WTC11 (cell line): ENCODE measurements at regions of chr1 and their contacts with region 1.

Region 1: DNA sequence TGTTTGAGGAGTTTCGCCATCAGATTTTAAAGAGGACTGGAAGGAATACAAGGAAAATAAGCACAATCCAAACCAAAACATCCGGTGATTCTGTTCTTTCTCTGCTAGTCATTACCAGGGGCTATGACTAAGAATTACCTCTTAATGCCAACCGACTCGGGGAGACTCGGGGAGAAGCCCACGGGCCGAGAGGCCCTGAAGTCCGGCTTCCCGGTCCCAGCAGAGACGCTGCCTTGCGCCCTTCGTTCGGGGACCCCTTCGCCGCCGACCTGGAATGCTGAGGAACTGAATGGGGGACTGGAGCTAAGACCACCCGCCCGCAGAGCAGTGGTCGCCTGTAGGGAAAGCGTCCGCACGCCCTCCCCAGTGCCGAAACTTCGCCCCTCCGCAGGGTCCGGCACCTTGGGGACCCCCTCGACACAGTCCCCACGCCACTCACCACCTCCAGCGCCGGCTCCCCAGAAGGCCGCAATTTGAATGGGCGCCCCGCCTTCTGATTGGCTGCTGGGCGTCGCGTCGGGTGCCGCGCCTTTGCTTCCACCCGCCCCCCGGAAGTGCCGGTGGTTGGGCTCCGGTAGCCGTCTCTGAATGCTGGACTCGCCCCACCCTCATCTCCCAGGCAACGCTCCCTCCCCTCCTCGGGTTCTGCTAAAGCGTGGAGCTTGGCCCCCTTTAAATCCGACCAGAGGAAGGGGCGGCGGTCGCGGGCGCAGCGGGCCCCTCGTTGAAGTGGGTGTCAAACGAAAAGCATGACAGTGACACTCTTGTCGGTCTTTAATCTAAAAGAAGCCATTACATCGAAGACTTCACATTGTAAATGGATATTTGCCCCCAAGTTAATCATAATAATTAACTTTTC is at the start of gene KIF14:
- DNase-seq: peak; percentile 95
- ATAC-seq: peak; percentile 99
- H3K4me3 Mint-ChIP-seq: peak within 1 kb of the TSS; percentile 96
- H3K27ac Mint-ChIP-seq: peak within 1 kb of the TSS; percentile 87
- H3K4me1 Mint-ChIP-seq: peaks cover 24% of the 10 kb centered on the region
- H3K27me3 Mint-ChIP-seq: no peaks in the 10 kb centered on the region
- CTCF ChIP-seq: no peak
- total RNA-seq, gene KIF14: 20.0 to 24.4 TPM (median 20.7 TPM) in 3 replicates

Region 2: GRCh38 chr1:200226268-200226968 is 394.1 kb before region 1 on chr1:
- CTCF ChIA-PET with region 1: no interaction called
- POLR2A ChIA-PET with region 1: no interaction called
- DNase-seq: no peak
- ATAC-seq: peak; percentile 75
- H3K4me3 Mint-ChIP-seq: peak overlapping the region; percentile 4; the same call in 1 of the 2 replicates
- H3K27ac Mint-ChIP-seq: peak overlapping the region; percentile 93
- H3K4me1 Mint-ChIP-seq: peaks cover 54% of the 10 kb centered on the region
- H3K27me3 Mint-ChIP-seq: no peaks in the 10 kb centered on the region; the same call in 1 of the 2 replicates
- CTCF ChIP-seq: no peak

Region 3: GRCh38 chr1:200634261-200635122 is 14.0 kb after region 1 on chr1:
- CTCF ChIA-PET with region 1: interaction called, 16 read pairs
- POLR2A ChIA-PET with region 1: no interaction called
- DNase-seq: no peak
- ATAC-seq: no peak; the same call in 1 of the 2 replicates
- H3K4me3 Mint-ChIP-seq: no peak overlapping the region
- H3K27ac Mint-ChIP-seq: no peak overlapping the region
- H3K4me1 Mint-ChIP-seq: peaks cover 8% of the 10 kb centered on the region
- H3K27me3 Mint-ChIP-seq: no peaks in the 10 kb centered on the region
- CTCF ChIP-seq: no peak

Region 4: GRCh38 chr1:200669314-200670241 is 49.1 kb after region 1 on chr1 and contains the start of gene DDX59:
- CTCF ChIA-PET with region 1: interaction called, 40 read pairs
- POLR2A ChIA-PET with region 1: interaction called, 8 read pairs
- DNase-seq: peak; percentile 96
- ATAC-seq: peak; percentile 88
- H3K4me3 Mint-ChIP-seq: peak within 1 kb of the TSS; percentile 80
- H3K27ac Mint-ChIP-seq: peak within 1 kb of the TSS; percentile 70
- H3K4me1 Mint-ChIP-seq: peaks cover 36% of the 10 kb centered on the region
- H3K27me3 Mint-ChIP-seq: no peaks in the 10 kb centered on the region
- CTCF ChIP-seq: no peak
- total RNA-seq, gene DDX59: 15.5 to 19.4 TPM (median 17.0 TPM) in 3 replicates

Region 5: GRCh38 chr1:200802865-200803512 is 182.5 kb after region 1 on chr1:
- CTCF ChIA-PET with region 1: interaction called, 29 read pairs
- POLR2A ChIA-PET with region 1: no interaction called
- DNase-seq: peak; percentile 94
- ATAC-seq: peak; percentile 98
- H3K4me3 Mint-ChIP-seq: no peak overlapping the region
- H3K27ac Mint-ChIP-seq: peak overlapping the region; percentile 73; the same call in 1 of the 2 replicates
- H3K4me1 Mint-ChIP-seq: peaks cover 41% of the 10 kb centered on the region
- H3K27me3 Mint-ChIP-seq: no peaks in the 10 kb centered on the region
- CTCF ChIP-seq: peak; percentile 80

Region 6: DNA sequence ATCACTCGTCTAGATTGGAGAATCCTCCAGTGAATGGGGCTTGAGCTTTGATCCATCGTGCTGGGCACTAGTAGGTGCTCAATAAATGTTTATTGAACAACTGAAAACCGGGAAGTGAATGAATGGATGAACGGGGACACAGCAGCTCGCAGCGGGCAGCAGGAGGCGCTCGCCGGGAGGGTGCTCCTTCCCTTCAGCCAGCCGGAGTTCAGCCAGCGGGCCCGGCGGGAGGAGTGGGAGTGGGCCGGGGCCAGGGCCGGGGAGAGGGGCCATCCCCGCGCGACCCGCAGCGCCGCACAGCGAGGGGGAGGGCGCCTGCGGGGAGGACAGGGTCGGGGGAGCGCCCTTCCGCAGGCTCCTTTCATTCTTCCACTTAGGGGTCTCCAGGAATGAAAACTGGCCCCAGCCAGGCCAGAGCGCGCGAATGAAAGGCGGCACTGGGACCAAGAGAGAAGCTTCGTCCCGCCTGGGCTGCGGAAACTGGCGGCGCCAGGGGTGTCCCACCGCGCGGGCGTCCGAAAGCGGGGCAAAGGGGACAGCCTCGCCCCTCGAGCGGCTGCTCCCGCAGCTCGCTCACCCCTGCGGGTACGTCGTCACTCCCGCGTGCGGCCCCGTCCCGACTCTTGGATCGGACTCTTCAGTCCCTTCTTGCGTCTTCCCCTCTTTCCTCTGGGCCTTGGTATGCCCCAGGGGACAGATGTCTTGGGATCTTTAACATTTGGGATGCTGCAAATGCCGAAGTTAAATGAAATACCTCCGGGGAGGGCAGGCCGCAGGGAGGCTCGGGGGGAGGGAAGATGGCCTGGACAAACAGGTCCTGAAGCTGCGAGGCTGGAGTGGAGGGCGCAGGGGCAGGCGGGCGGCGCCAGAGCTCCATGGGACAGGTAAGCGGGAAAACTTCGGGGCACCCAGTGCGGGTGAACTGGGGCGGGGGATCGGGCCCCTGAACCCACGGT is 270.6 kb after region 1 on chr1:
- CTCF ChIA-PET with region 1: interaction called, 15 read pairs
- POLR2A ChIA-PET with region 1: interaction called, 3 read pairs
- DNase-seq: peak; percentile 80
- ATAC-seq: peak; percentile 32
- H3K4me3 Mint-ChIP-seq: peak overlapping the region; percentile 88
- H3K27ac Mint-ChIP-seq: peak overlapping the region; percentile 94
- H3K4me1 Mint-ChIP-seq: peaks cover 71% of the 10 kb centered on the region
- H3K27me3 Mint-ChIP-seq: peaks cover 3% of the 10 kb centered on the region; the same call in 1 of the 2 replicates
- CTCF ChIP-seq: no peak